ENCODE measurements at regions of chr4 and their contacts with region 1.

Region 1: DNA sequence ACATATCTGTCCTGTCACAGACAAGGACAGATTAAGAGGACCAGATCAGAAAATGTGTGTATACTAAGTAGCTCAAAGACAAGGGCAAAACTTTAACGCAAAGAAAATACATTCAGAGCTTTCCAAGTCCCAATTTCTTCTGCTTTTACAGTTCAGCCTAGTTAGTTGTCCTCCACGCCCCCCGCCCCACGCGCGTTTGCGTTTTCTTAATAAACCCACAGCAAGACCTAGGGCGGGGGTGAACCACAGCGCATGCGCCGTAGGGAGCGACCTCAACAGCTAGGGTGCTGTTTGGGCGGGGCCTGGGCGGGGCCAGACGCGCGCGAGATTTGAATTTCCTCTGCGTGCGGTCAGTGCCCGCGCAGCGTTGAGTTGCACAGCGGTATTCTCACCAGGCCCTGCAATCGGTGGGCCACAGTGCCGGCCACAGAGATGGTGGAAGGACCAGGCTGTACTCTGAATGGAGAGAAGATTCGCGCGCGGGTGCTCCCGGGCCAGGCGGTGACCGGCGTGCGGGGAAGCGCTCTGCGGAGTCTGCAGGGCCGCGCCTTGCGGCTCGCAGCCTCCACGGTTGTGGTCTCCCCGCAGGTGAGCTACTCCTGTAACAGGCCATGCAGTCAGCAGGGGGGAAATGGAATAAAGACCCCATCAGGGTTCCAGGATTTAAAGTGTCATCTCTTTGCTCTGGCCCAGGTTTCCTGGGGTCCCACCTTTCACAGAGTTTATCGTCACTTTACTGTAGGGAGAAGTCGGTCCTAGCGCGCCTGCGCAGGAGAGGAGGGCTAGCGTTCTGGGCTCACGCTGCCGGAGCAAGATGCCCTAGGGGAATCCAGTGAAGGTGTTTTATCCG is at the start of gene NEIL3:
- DNase-seq: peak; percentile 97
- H3K4me3 Mint-ChIP-seq: peak within 1 kb of the TSS; percentile 95
- H3K27ac Mint-ChIP-seq: peak within 1 kb of the TSS; percentile 98
- H3K4me1 Mint-ChIP-seq: peaks cover 48% of the 10 kb centered on the region
- H3K27me3 Mint-ChIP-seq: no peaks in the 10 kb centered on the region
- total RNA-seq, gene NEIL3: 15.5 and 17.0 TPM in 2 replicates

Region 2: DNA sequence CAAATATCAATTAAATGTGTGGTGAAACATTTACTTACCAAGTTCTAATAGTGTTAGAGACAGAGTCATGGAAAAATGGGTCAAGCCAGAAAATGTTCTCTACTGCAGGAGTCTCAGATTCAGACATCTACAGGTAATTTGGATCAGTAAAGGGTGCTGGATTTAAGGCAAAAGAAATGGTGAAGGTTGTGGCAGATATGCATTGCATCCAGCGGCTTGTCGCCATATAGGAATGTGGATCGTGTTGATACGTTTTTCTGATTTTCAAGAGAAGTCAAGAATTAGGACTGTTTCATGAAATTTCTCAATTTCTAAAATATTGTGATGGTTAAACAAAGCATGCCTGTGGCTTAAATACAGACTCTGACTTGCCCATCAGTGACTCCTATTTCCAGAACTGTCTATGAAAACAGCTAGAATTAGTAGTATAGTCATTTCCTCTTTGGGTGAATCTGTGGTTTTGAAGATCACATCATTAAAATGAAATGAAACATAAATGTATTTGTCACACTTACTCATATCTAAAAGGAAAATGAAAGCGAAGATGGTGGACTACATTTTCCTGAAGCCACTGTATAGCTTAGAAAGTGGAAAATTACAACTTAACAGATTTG is 406.9 kb before region 1 on chr4:
- intact Hi-C with region 1: loop called (anchors 2 kb)
- DNase-seq: peak; percentile 60
- H3K4me3 Mint-ChIP-seq: peak overlapping the region; percentile 34
- H3K27ac Mint-ChIP-seq: peak overlapping the region; percentile 49
- H3K4me1 Mint-ChIP-seq: peaks cover 10% of the 10 kb centered on the region
- H3K27me3 Mint-ChIP-seq: peaks cover 8% of the 10 kb centered on the region

Region 3: DNA sequence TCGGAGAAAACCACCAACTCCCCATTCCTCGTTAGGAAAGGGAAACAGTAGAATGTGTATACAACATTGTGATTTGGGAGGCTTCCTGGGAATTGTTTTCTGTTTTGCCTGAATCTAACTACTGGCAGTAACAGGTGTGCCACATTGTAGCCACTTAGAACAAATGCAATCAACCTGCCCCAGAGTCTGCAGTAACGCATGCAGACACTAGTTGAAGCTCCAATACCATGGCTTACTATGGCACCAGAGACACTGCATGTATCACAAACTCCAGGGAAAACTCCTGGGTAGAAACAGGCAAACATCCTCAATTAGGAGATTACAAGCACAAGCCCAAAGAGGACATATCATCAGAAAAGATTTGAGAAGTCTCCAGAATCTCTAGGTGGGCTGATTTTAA is 154.3 kb before region 1 on chr4:
- intact Hi-C with region 1: no loop called
- DNase-seq: no peak
- H3K4me3 Mint-ChIP-seq: no peak overlapping the region
- H3K27ac Mint-ChIP-seq: no peak overlapping the region
- H3K4me1 Mint-ChIP-seq: no peaks in the 10 kb centered on the region
- H3K27me3 Mint-ChIP-seq: no peaks in the 10 kb centered on the region

Region 4: DNA sequence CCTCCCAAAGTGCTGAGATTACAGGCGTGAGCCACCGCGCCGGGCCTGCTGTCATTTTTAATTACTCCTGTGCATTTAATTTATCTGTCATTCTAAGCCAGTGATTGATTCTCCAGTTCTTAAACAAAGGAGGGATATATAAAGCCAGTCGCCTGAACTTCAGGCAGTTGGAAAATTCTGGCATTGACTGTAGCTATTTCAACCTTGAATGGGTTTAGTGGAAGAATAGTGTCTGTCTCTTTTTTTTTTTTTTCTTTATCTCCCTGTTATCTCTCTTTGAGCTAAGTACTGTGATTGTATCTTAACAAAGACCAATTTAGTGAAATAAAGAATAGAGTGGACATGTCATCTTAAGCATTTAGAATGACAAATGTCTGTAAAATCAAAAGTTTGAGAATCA is 11.0 kb after region 1 on chr4:
- intact Hi-C with region 1: loop called (anchors 1 kb)
- DNase-seq: no peak
- H3K4me3 Mint-ChIP-seq: peak overlapping the region; percentile 38
- H3K27ac Mint-ChIP-seq: peak overlapping the region; percentile 25
- H3K4me1 Mint-ChIP-seq: peaks cover 66% of the 10 kb centered on the region
- H3K27me3 Mint-ChIP-seq: no peaks in the 10 kb centered on the region

Region 5: GRCh38 chr4:177401658-177402273 is 92.0 kb after region 1 on chr4:
- intact Hi-C with region 1: loop called (anchors 5 kb)
- DNase-seq: peak; percentile 61
- H3K4me3 Mint-ChIP-seq: peak overlapping the region; percentile 65
- H3K27ac Mint-ChIP-seq: peak overlapping the region; percentile 60
- H3K4me1 Mint-ChIP-seq: peaks cover 39% of the 10 kb centered on the region
- H3K27me3 Mint-ChIP-seq: peaks cover 13% of the 10 kb centered on the region